ENCODE measurements at regions of chr15 and their contacts with region 1.

Region 1: GRCh38 chr15:99361541-99362185 is 110.4 kb downstream of the LRRC28 start:
- DNase-seq: no peak
- H3K4me3 ChIP-seq: no peak overlapping the region
- H3K27ac ChIP-seq: no peak overlapping the region
- H3K4me1 ChIP-seq: no peaks in the 10 kb centered on the region
- H3K27me3 ChIP-seq: no peaks in the 10 kb centered on the region
- CTCF ChIP-seq: peak in 2 of 3 experiments; percentile 26 to 49; a peak in 2 of 4 replicates
- EP300 ChIP-seq: no peak
- POLR2A ChIP-seq: no peak
- RAD21 ChIP-seq: peak in 1 of 2 experiments; percentile 27; a peak in 1 of 4 replicates

Region 2: GRCh38 chr15:99250494-99251435 is 110.9 kb before region 1 on chr15:
- CTCF ChIA-PET with region 1: no interaction called
- POLR2A ChIA-PET with region 1: no interaction called
- DNase-seq: peak; percentile 92 to 97
- H3K4me3 ChIP-seq: peak overlapping the region; percentile 84 to 93 (median 90)
- H3K27ac ChIP-seq: 0 out of 2 replicates have a peak overlapping the region, but pooled peaks have one; percentile 32
- H3K4me1 ChIP-seq: peaks cover 0 to 3% (median under 1%) of the 10 kb centered on the region in 4 experiments; a peak in 4 of 7 replicates
- H3K27me3 ChIP-seq: no peaks in the 10 kb centered on the region
- CTCF ChIP-seq: no peak
- EP300 ChIP-seq: no peak
- POLR2A ChIP-seq: peak; percentile 22 to 82
- RAD21 ChIP-seq: no peak

Region 3: GRCh38 chr15:99282121-99282520 is 79.5 kb before region 1 on chr15:
- CTCF ChIA-PET with region 1: interaction called, 11 read pairs
- POLR2A ChIA-PET with region 1: no interaction called
- DNase-seq: no peak
- H3K4me3 ChIP-seq: no peak overlapping the region
- H3K27ac ChIP-seq: no peak overlapping the region
- H3K4me1 ChIP-seq: 0 out of 7 replicates have a peak, but pooled peaks cover 0 to 2% (median 0%) of the 10 kb centered on the region in 4 experiments
- H3K27me3 ChIP-seq: no peaks in the 10 kb centered on the region
- CTCF ChIP-seq: no peak
- EP300 ChIP-seq: no peak
- POLR2A ChIP-seq: no peak
- RAD21 ChIP-seq: no peak

Region 4: GRCh38 chr15:99343881-99344551 is 17.6 kb before region 1 on chr15:
- CTCF ChIA-PET with region 1: interaction called, 29 read pairs
- POLR2A ChIA-PET with region 1: no interaction called
- DNase-seq: peak; percentile 21 to 65
- H3K4me3 ChIP-seq: no peak overlapping the region
- H3K27ac ChIP-seq: no peak overlapping the region
- H3K4me1 ChIP-seq: no peaks in the 10 kb centered on the region
- H3K27me3 ChIP-seq: no peaks in the 10 kb centered on the region
- CTCF ChIP-seq: peak; percentile 72 to 91 (median 91)
- EP300 ChIP-seq: no peak
- POLR2A ChIP-seq: no peak
- RAD21 ChIP-seq: peak; percentile 70 to 77

Region 5: DNA sequence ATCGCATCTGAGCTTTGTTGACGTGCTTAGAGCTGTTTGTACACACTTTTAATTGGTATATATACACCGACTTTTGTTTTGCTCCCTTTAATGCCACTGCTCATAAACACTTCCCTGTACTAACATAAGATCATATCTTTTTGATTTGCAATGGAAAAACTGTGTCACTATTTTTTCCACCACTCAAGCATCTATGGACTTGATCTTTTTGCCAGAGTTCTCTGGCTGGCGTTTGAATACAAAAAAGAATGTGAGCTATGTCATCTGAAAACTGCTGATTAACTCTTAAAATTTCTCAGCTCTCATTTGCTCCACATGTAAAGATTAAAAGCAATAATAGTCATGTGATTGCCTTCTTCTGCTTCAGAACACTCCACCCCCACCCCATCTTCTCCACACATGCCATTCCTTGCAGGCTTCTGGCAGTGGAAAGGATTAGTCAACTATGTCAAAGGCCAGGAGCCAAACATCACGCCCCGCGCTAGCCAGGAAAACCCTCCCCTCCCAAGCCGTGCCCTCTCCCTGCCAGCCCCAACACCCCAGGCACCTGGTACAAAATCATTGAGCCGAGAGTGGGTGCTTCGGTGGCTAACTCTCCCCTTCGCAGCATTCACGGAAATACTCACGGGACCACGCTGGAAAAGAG is 80.7 kb after region 1 on chr15:
- CTCF ChIA-PET with region 1: no interaction called
- POLR2A ChIA-PET with region 1: no interaction called
- DNase-seq: no peak
- H3K4me3 ChIP-seq: no peak overlapping the region
- H3K27ac ChIP-seq: no peak overlapping the region
- H3K4me1 ChIP-seq: peaks cover 3 to 11% (median 5%) of the 10 kb centered on the region in 4 experiments; a peak in 5 of 7 replicates
- H3K27me3 ChIP-seq: no peaks in the 10 kb centered on the region
- CTCF ChIP-seq: no peak
- EP300 ChIP-seq: no peak
- POLR2A ChIP-seq: no peak
- RAD21 ChIP-seq: no peak